Right ventricle myocardium superior (tissue), 1 donor: ENCODE measurements at regions of chr18 and their contacts with region 1.

Region 1: GRCh38 chr18:23259701-23260582 is 124.7 kb downstream of the CABLES1 start:
- DNase-seq: peak; percentile 89
- ATAC-seq: peak; percentile 88

Region 2: GRCh38 chr18:22977847-22978701 is 281.9 kb before region 1 on chr18:
- intact Hi-C with region 1: no loop called
- DNase-seq: no peak
- ATAC-seq: no peak

Region 3: GRCh38 chr18:23131693-23132319 is 128.1 kb before region 1 on chr18:
- intact Hi-C with region 1: loop called (anchors 10 kb)
- DNase-seq: no peak
- ATAC-seq: peak; percentile 77

Region 4: GRCh38 chr18:23356915-23357601 is 97.1 kb after region 1 on chr18:
- intact Hi-C with region 1: loop called (anchors 10 kb)
- DNase-seq: no peak
- ATAC-seq: peak; percentile 24

Region 5: DNA sequence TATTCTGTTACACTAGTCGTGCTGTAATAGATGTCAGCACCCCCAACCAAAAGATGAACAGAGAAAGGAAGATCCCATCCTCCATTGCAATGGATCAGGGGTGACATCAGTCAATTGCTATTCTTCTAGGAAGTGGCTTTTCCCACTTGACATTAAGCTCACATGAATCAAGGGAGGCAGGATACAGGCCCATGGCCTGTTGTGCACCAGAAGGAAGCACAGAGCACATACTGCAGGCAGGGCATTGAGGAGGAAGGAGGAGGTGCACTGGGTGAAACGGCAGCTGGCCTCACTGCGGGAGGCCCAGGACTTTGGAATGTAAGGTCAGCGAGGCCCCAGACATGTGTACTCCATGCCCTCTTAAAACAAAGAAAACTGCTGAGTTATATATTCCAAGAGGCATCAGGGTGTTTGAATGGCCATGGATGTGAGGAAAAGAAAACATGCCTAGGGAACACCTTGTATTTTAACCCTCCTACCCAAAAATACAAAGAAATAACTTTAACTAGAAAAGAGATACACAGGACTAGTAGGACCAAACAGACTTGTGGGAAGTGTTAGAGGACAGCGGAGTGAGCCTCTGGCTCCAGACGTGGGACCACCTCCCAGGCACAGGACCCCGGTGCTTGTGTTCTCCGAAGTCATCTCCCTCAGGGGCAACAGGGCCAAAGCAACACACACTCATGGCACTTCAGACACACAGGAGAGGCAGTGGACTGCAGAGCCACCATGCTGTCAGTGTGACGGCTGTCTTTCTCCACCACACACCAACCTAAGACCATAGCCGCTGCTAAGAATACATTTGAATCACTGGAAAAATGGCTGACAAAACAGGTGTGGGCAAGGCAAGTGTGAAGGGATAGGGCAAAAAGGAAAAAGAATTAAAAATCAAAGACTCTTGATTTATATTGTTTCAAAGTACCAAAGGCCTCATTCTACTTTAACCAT is 141.7 kb after region 1 on chr18:
- intact Hi-C with region 1: no loop called
- DNase-seq: no peak
- ATAC-seq: no peak